Ascending aorta (tissue), 2 donors: ENCODE measurements at regions of chr6 and their contacts with region 1.

Region 1: GRCh38 chr6:119349323-119350042 is at the start of gene MAN1A1:
- DNase-seq: peak; percentile 58 to 94
- H3K4me3 ChIP-seq: peak within 1 kb of the TSS; percentile 97 to 98
- H3K27ac ChIP-seq: peak within 1 kb of the TSS; percentile 93 to 94
- H3K4me1 ChIP-seq: peaks cover 0 to 11% of the 10 kb centered on the region in 2 donors
- H3K27me3 ChIP-seq: no peaks in the 10 kb centered on the region
- CTCF ChIP-seq: peak in 2 of 3 experiments; percentile 6 to 15
- total RNA-seq, gene MAN1A1: 75.5 TPM

Region 2: DNA sequence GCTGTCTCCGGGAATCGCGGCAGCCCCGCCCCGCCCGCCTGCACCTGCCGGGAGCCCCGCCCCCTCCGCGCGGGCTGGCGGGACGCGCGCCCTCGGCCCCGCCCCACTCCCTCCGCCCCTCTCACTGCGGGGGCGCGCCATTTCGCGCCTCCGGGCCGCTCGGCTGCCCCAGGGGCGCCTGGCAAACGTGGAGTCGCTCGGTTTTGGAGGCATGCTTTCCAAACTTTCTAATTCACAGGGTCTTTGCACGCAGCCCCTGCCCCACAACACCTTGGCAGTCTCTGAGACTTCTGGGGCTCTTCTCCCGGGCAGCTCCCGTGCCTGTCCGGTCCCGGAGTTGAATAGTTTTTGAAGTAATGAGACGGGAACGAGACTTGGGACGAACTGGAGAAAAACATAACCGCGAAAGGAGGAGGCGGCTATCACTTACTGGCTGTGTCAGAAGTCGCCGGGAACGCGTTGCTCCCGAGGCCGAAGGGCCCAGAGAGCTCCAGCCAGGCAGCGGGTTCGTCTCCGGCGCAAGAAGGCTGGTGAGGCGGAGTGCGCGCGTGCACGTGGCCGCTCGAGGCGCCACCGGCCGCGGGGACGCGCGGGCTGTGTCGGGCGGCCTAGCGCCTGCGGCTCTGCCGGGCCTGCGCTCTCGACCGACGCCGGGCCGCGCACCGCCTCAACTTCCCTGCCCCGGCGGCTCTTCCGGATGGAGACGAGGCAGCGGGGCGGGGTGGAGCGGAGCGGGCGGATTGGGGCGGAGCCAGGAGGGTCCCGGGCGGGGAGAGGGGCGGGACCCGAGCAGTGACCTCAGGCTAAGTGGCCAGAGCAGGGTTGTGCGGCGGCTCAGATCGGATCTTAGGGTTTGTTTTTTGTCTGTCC is 414.8 kb before region 1 on chr6 and contains the start of gene MCM9:
- intact Hi-C with region 1: loop called (anchors 10 kb)
- DNase-seq: peak; percentile 42 to 94
- H3K4me3 ChIP-seq: peak within 1 kb of the TSS; percentile 75 to 97
- H3K27ac ChIP-seq: peak within 1 kb of the TSS; percentile 88 to 95
- H3K4me1 ChIP-seq: peaks cover 0 to 3% of the 10 kb centered on the region in 2 donors
- H3K27me3 ChIP-seq: no peaks in the 10 kb centered on the region
- CTCF ChIP-seq: no peak
- total RNA-seq, gene MCM9: 5.5 TPM

Region 3: GRCh38 chr6:119078376-119079282 is 270.9 kb before region 1 on chr6 and contains the start of gene FAM184A:
- intact Hi-C with region 1: loop called (anchors 2 kb)
- DNase-seq: peak in 1 of 2 donors; percentile 80
- H3K4me3 ChIP-seq: peak within 1 kb of the TSS; percentile 82 to 90
- H3K27ac ChIP-seq: peak within 1 kb of the TSS; percentile 59 to 66
- H3K4me1 ChIP-seq: no peaks in the 10 kb centered on the region
- H3K27me3 ChIP-seq: no peaks in the 10 kb centered on the region
- CTCF ChIP-seq: peak in 2 of 3 experiments; percentile 8 to 14
- total RNA-seq, gene FAM184A: 3.1 TPM

Region 4: DNA sequence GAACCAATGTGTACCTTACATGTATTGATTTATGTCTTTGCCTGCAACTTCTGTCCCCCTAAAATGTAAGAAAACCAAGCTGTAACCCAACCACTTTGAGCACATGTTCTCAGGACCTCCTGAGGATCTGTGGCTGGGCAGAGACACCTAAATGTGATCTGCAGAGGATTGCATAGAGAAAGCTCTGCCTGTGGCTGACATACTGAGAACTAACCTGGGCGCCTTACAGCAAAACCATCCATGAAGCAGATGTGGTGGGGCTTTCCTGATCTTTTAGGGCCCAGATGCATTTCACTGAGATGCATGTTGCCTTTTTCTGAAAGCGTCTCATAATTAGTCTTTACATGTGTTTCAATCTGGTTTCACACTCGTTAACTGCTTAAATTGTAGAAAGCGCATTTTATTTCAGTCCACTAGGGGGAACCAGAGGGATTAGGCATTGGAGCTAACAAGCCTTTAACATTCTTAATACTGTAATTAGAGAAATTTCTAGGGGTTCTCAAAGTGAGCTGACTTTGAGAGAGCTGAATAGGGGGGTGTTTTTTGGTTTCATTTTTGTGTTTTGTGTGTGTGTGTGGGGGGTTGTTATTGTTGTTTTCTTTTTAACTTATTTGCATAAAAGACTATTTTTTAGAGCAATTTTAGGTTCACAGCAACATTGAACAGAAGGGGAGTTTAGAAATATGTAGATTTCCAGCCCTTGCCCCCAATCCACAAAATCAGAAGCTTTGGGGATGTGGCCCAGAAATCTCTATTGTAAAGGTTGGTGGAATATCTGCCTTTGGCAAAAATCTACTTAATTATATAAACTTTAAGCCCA is 220.1 kb before region 1 on chr6:
- intact Hi-C with region 1: loop called (anchors 2 kb)
- DNase-seq: no peak
- H3K4me3 ChIP-seq: no peak overlapping the region
- H3K27ac ChIP-seq: peak overlapping the region; percentile 14 to 47
- H3K4me1 ChIP-seq: peaks cover 4 to 11% of the 10 kb centered on the region in 2 donors
- H3K27me3 ChIP-seq: no peaks in the 10 kb centered on the region
- CTCF ChIP-seq: peak; percentile 53 to 85 (median 85)

Region 5: GRCh38 chr6:119147101-119148053 is 202.1 kb before region 1 on chr6:
- intact Hi-C with region 1: loop called (anchors 5 kb)
- DNase-seq: peak in 1 of 2 donors; percentile 87
- H3K4me3 ChIP-seq: no peak overlapping the region
- H3K27ac ChIP-seq: peak overlapping the region; percentile 63 to 73
- H3K4me1 ChIP-seq: peaks cover 0 to 18% of the 10 kb centered on the region in 2 donors
- H3K27me3 ChIP-seq: no peaks in the 10 kb centered on the region
- CTCF ChIP-seq: no peak